ENCODE measurements at regions of chr10 and their contacts with region 1.

Region 1: DNA sequence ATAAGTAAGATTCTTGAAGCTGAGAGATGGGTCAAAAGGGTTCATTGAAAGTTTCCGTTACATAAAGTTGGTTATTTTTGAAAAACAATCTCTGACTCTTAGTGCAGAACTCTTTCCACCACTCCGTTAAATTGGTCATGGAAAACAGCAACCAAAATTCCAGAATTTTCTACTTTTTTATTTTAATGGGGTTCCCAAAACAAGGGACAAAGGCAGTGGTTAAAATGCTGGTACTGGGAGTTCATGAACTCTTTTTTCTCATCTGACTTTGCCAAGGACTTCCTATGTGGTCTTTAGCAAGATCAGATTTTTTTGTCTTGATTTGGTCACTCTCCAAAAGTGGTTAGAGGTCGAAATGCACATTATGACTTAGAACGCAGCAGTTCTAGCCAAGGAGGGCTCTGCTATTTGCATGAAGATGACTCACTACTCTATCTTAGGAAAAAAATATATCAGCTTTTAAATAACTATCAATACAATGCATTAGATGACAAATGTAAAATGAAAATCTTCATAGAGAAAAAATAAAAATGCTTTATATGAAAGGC is 145.7 kb downstream of the REEP3 start:
- DNase-seq: peak; percentile 92
- H3K4me3 ChIP-seq: no peak overlapping the region
- H3K27ac ChIP-seq: peak overlapping the region; percentile 40
- H3K4me1 ChIP-seq: peaks cover 34% of the 10 kb centered on the region
- H3K27me3 ChIP-seq: no peaks in the 10 kb centered on the region
- CTCF ChIP-seq: no peak
- POLR2A ChIP-seq: no peak

Region 2: GRCh38 chr10:63644418-63645142 is 22.3 kb before region 1 on chr10:
- CTCF ChIA-PET with region 1: no interaction called
- POLR2A ChIA-PET with region 1: interaction called, 3 read pairs
- dilution Hi-C with region 1: no loop called
- intact Hi-C with region 1: loop called (anchors 1 kb)
- DNase-seq: peak; percentile 88
- H3K4me3 ChIP-seq: peak overlapping the region in 1 of 3 experiments; percentile 10
- H3K27ac ChIP-seq: peak overlapping the region; percentile 86
- H3K4me1 ChIP-seq: peaks cover 33% of the 10 kb centered on the region
- H3K27me3 ChIP-seq: no peaks in the 10 kb centered on the region
- CTCF ChIP-seq: no peak
- POLR2A ChIP-seq: peak; percentile 42

Region 3: GRCh38 chr10:63651864-63652263 is 15.0 kb before region 1 on chr10:
- CTCF ChIA-PET with region 1: no interaction called
- POLR2A ChIA-PET with region 1: interaction called, 3 read pairs
- dilution Hi-C with region 1: no loop called
- intact Hi-C with region 1: loop called (anchors 2 kb)
- DNase-seq: no peak
- H3K4me3 ChIP-seq: no peak overlapping the region
- H3K27ac ChIP-seq: no peak overlapping the region
- H3K4me1 ChIP-seq: no peaks in the 10 kb centered on the region
- H3K27me3 ChIP-seq: no peaks in the 10 kb centered on the region
- CTCF ChIP-seq: no peak
- POLR2A ChIP-seq: no peak

Region 4: GRCh38 chr10:63700209-63700613 is 33.3 kb after region 1 on chr10:
- CTCF ChIA-PET with region 1: interaction called, 10 read pairs
- POLR2A ChIA-PET with region 1: no interaction called
- dilution Hi-C with region 1: no loop called
- intact Hi-C with region 1: no loop called
- DNase-seq: peak; percentile 91
- H3K4me3 ChIP-seq: no peak overlapping the region
- H3K27ac ChIP-seq: peak overlapping the region; percentile 93
- H3K4me1 ChIP-seq: peaks cover 27% of the 10 kb centered on the region
- H3K27me3 ChIP-seq: no peaks in the 10 kb centered on the region
- CTCF ChIP-seq: no peak
- POLR2A ChIP-seq: no peak